T-cell (primary cell): ENCODE measurements at regions of chr6 and their contacts with region 1.

Region 1: DNA sequence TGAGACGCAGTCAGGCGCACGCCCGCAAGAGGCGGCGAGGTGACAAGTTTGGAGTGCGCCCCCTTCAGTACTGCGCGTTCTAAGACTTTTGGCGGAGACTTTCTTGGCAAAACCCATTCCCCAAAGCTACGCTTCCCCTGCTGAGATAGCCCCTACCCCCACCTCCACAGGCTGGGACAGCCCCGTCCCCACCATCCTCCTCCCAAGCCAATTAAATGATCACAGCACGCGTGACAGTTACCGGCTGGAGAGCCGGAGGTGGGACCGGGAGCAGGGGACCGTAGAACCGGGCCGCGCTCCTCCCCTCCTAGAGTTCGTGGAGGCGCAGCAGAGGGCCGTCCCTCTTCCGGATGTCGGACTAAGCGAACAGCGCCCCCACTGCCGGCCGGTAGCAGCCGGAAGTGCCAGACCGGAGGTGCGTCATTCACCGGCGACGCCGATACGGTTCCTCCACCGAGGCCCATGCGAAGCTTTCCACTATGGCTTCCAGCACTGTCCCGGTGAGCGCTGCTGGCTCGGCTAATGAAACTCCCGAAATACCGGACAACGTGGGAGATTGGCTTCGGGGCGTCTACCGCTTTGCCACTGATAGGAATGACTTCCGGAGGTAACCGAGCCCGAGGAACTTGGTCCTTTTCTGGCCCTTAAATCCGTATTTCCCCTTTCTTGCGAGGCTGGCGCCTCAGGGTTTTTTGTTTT is at the start of gene TOMM6:
- DNase-seq: peak; percentile 86 to 97 (median 93)
- ATAC-seq: peak; percentile 82 to 83 (median 82)
- H3K4me3 ChIP-seq: peak within 1 kb of the TSS; percentile 72 to 97
- H3K4me3 Mint-ChIP-seq: peak within 1 kb of the TSS; percentile 93 to 97 (median 94)
- H3K27ac ChIP-seq: peak within 1 kb of the TSS; percentile 89
- H3K27ac Mint-ChIP-seq: peak within 1 kb of the TSS; percentile 96
- H3K4me1 ChIP-seq: peaks cover 2 to 18% of the 10 kb centered on the region in 2 experiments
- H3K4me1 Mint-ChIP-seq: peaks cover 8 to 31% (median 16%) of the 10 kb centered on the region in 3 donors
- H3K27me3 ChIP-seq: peaks cover 0 to 3% of the 10 kb centered on the region in 2 experiments
- H3K27me3 Mint-ChIP-seq: no peaks in the 10 kb centered on the region
- total RNA-seq, gene TOMM6: 124 to 131 (median 127) TPM

Region 2: GRCh38 chr6:41689171-41690008 is 98.0 kb before region 1 on chr6:
- CTCF ChIA-PET with region 1: no interaction called
- POLR2A ChIA-PET with region 1: no interaction called
- DNase-seq: no peak
- ATAC-seq: no peak
- H3K4me3 ChIP-seq: no peak overlapping the region
- H3K4me3 Mint-ChIP-seq: no peak overlapping the region
- H3K27ac ChIP-seq: no peak overlapping the region
- H3K27ac Mint-ChIP-seq: no peak overlapping the region
- H3K4me1 ChIP-seq: no peaks in the 10 kb centered on the region
- H3K4me1 Mint-ChIP-seq: no peaks in the 10 kb centered on the region
- H3K27me3 ChIP-seq: no peaks in the 10 kb centered on the region
- H3K27me3 Mint-ChIP-seq: no peaks in the 10 kb centered on the region

Region 3: DNA sequence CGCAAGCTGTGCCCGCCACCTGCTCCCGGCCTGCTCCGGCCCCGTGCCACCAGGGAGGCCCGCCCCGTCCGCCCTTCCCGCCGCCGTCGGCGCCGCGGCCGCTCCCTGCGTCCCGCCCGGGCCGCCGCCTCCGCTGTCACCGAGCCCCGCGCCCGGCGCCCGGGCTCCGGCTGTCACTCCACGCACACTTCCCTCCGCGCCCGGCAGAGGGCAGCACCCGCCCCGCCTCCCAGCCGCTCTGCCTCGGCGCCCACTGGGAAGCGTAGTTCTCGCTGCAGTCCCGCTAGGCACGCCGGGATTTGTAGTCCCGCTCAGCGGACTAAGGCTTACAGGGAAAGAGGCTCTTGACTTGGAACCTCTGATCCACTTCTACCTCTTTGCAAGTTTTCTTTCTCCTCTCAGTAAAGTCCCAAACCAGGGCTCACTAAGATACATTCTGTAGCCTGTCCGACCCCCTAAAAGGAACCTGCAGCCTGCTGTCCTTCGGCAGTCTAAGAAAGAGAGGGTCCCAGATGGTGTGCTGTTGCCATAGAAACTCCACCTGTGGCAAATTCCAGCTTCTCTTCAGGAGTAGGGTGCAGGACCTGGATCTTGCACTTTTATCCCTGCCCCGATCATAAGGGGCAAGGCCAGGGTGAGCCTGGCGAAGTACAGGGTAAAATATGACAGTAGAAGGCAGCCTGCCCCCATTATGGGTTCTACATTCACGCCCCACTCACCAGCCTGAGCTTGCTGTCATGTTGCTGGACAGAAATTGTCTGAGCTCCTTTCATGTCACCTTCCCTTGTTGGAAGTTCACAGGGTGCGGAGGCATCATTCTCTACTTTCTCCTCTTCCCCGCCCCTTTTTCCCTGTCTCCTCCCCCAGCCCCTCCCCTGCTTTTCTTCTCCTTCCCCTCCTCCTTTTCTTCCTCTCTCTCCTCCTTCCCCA is 51.7 kb before region 1 on chr6 and contains the start of gene TFEB:
- CTCF ChIA-PET with region 1: interaction called in 1 of 2 experiments, 12 read pairs
- POLR2A ChIA-PET with region 1: no interaction called
- DNase-seq: peak; percentile 80 to 96 (median 91)
- ATAC-seq: peak; percentile 68 to 82 (median 71)
- H3K4me3 ChIP-seq: peak within 1 kb of the TSS; percentile 60 to 75
- H3K4me3 Mint-ChIP-seq: peak within 1 kb of the TSS; percentile 80 to 84 (median 80)
- H3K27ac ChIP-seq: peak within 1 kb of the TSS; percentile 79
- H3K27ac Mint-ChIP-seq: peak within 1 kb of the TSS; percentile 55 to 77
- H3K4me1 ChIP-seq: peaks cover 21 to 38% of the 10 kb centered on the region in 2 experiments
- H3K4me1 Mint-ChIP-seq: peaks cover 25 to 32% (median 31%) of the 10 kb centered on the region in 3 donors
- H3K27me3 ChIP-seq: peaks cover 0 to 13% of the 10 kb centered on the region in 2 experiments
- H3K27me3 Mint-ChIP-seq: no peaks in the 10 kb centered on the region
- total RNA-seq, gene TFEB: 18.9 to 28.1 (median 19.5) TPM

Region 4: DNA sequence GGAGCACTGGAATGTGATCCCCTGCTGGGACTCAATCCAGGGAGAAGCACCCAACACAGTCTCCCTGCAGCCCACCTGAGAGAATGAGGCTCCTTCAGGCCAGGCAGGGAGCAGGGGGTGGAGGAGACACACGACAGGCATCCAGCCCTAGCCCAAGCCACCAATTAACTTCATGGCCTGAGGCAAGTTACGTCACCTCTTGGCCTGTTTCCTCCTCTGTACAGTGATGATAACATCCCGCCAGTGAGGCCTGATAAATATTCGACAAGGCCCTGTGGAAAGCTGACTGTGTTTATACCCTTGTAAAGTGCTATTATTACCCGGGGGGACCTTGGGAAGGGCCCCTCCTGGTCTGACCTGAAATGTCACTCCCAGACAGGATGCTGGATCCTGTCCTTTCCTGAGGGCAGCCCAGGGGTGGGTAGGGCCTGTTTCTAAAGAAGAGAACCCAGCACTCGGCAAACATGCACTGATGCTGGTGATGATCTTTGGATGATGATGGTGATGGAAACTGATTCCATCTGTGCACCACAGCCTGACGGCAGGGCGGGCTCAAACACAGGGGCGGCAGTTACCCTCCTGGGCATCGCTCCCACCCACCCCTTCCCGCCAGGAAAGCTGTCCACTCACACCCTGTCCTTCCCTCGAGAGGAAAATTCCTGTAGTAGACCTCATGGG is 20.1 kb before region 1 on chr6:
- CTCF ChIA-PET with region 1: no interaction called
- POLR2A ChIA-PET with region 1: no interaction called
- DNase-seq: no peak
- ATAC-seq: no peak
- H3K4me3 ChIP-seq: no peak overlapping the region
- H3K4me3 Mint-ChIP-seq: no peak overlapping the region
- H3K27ac ChIP-seq: no peak overlapping the region
- H3K27ac Mint-ChIP-seq: no peak overlapping the region
- H3K4me1 ChIP-seq: peaks cover 0 to 4% of the 10 kb centered on the region in 2 experiments
- H3K4me1 Mint-ChIP-seq: peaks cover 0 to 6% (median 3%) of the 10 kb centered on the region in 3 donors
- H3K27me3 ChIP-seq: no peaks in the 10 kb centered on the region
- H3K27me3 Mint-ChIP-seq: peaks cover 0 to 3% of the 10 kb centered on the region in 2 donors

Region 5: GRCh38 chr6:42038811-42039408 is 251.5 kb after region 1 on chr6:
- CTCF ChIA-PET with region 1: interaction called in 1 of 2 experiments, 17 read pairs
- POLR2A ChIA-PET with region 1: no interaction called
- DNase-seq: no peak
- ATAC-seq: no peak
- H3K4me3 ChIP-seq: peak overlapping the region; percentile 33 to 58
- H3K4me3 Mint-ChIP-seq: peak overlapping the region; percentile 67 to 99 (median 80)
- H3K27ac ChIP-seq: peak overlapping the region; percentile 57
- H3K27ac Mint-ChIP-seq: peak overlapping the region; percentile 95 to 96
- H3K4me1 ChIP-seq: peaks cover 50 to 97% of the 10 kb centered on the region in 2 experiments
- H3K4me1 Mint-ChIP-seq: peaks cover 67 to 84% (median 83%) of the 10 kb centered on the region in 3 donors
- H3K27me3 ChIP-seq: no peaks in the 10 kb centered on the region
- H3K27me3 Mint-ChIP-seq: no peaks in the 10 kb centered on the region

Region 6: DNA sequence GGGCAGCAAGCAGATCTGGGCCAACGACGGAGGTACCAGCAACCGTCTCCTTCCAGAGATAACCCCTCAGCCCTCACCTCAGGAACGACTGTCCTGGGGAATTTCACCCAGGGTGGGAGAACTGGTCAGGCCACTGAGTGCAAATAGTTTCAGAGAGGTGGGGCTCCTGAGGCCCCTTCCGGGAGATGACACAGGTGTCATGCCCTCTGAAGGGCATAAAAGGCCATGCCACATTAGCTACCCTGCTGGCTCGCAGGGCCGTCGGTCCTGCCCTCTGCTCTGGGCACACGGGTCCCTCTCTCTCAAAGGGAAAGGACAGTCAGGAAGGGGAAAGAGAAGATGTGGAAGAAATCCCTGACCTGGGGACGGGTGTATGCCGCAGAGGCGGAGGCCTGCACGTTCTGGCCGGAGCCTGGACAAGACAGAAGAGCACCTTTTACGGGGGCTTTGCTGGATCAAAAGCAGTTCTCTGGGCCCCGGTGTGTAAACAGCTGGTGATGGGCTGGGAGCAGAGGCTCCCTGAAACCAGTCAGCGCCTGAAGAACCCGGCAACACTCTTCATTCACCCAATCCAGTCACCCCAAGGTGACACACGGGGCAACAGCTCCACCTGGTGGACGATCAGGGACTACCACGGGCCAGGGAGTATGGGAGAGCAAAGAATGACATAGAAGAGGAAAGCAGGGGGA is 256.6 kb after region 1 on chr6:
- CTCF ChIA-PET with region 1: interaction called in 1 of 2 experiments, 17 read pairs
- POLR2A ChIA-PET with region 1: interaction called in 1 of 2 experiments, 3 read pairs
- DNase-seq: peak; percentile 78 to 96 (median 91)
- ATAC-seq: peak; percentile 21 to 28 (median 24)
- H3K4me3 ChIP-seq: peak overlapping the region; percentile 44 to 60
- H3K4me3 Mint-ChIP-seq: peak overlapping the region; percentile 72 to 99 (median 73)
- H3K27ac ChIP-seq: peak overlapping the region; percentile 58
- H3K27ac Mint-ChIP-seq: peak overlapping the region; percentile 95 to 96
- H3K4me1 ChIP-seq: peaks cover 39 to 87% of the 10 kb centered on the region in 2 experiments
- H3K4me1 Mint-ChIP-seq: peaks cover 77 to 88% (median 87%) of the 10 kb centered on the region in 3 donors
- H3K27me3 ChIP-seq: no peaks in the 10 kb centered on the region
- H3K27me3 Mint-ChIP-seq: no peaks in the 10 kb centered on the region

Region 7: GRCh38 chr6:42050266-42051032 is 263.1 kb after region 1 on chr6 and contains the start of gene TAF8:
- CTCF ChIA-PET with region 1: interaction called in 1 of 2 experiments, 17 read pairs
- POLR2A ChIA-PET with region 1: interaction called in 1 of 2 experiments, 7 read pairs
- DNase-seq: peak; percentile 76 to 93 (median 84)
- ATAC-seq: peak; percentile 62 to 69 (median 63)
- H3K4me3 ChIP-seq: peak within 1 kb of the TSS; percentile 80 to 98
- H3K4me3 Mint-ChIP-seq: peak within 1 kb of the TSS; percentile 93 to 99 (median 98)
- H3K27ac ChIP-seq: peak within 1 kb of the TSS; percentile 77
- H3K27ac Mint-ChIP-seq: peak within 1 kb of the TSS; percentile 97 to 98
- H3K4me1 ChIP-seq: peaks cover 19 to 59% of the 10 kb centered on the region in 2 experiments
- H3K4me1 Mint-ChIP-seq: peaks cover 60 to 72% (median 61%) of the 10 kb centered on the region in 3 donors
- H3K27me3 ChIP-seq: no peaks in the 10 kb centered on the region
- H3K27me3 Mint-ChIP-seq: no peaks in the 10 kb centered on the region
- total RNA-seq, gene TAF8: 46.0 to 55.5 (median 47.6) TPM

Region 8: DNA sequence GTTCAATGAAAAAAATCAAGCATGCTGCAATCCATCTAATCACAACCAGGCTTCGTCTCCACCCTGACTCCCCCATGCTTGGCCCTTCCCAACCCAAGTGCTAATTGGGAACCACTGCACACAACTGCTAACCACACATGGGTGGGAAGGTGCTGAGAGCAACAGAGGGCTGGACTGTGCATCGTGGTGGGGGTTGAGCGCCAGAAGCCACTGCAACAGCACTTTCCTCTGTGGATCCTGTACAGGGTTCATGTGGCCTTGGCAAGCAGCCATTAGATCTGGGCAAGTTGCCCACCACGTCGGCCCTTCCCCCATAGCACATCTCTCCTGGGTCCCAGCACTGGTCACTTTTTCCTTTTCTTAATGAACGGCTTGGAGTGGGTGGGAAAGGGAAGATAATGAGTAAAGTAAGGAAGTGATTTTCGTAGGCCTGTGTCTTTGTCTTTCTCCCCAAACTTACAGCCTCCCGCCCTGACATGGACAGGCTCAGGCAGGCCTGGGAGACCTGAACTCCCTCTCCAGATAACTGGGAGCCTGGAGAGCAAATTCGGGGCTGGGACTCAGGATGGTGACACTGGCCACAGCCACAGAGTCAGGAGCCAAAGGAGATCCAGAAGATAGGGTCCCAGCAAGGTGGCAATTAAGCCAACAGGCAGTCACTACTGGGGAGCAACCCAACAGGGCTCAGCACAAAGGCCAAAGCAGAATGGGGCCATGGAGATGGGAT is 464.7 kb after region 1 on chr6:
- CTCF ChIA-PET with region 1: no interaction called
- POLR2A ChIA-PET with region 1: no interaction called
- DNase-seq: no peak
- ATAC-seq: no peak
- H3K4me3 ChIP-seq: no peak overlapping the region
- H3K4me3 Mint-ChIP-seq: no peak overlapping the region
- H3K27ac ChIP-seq: no peak overlapping the region
- H3K27ac Mint-ChIP-seq: peak overlapping the region in 1 of 2 donors; percentile 23
- H3K4me1 ChIP-seq: no peaks in the 10 kb centered on the region
- H3K4me1 Mint-ChIP-seq: peaks cover 0 to 2% (median 0%) of the 10 kb centered on the region in 3 donors
- H3K27me3 ChIP-seq: no peaks in the 10 kb centered on the region
- H3K27me3 Mint-ChIP-seq: no peaks in the 10 kb centered on the region